ENCODE measurements at regions of chr6 and their contacts with region 1.

Region 1: DNA sequence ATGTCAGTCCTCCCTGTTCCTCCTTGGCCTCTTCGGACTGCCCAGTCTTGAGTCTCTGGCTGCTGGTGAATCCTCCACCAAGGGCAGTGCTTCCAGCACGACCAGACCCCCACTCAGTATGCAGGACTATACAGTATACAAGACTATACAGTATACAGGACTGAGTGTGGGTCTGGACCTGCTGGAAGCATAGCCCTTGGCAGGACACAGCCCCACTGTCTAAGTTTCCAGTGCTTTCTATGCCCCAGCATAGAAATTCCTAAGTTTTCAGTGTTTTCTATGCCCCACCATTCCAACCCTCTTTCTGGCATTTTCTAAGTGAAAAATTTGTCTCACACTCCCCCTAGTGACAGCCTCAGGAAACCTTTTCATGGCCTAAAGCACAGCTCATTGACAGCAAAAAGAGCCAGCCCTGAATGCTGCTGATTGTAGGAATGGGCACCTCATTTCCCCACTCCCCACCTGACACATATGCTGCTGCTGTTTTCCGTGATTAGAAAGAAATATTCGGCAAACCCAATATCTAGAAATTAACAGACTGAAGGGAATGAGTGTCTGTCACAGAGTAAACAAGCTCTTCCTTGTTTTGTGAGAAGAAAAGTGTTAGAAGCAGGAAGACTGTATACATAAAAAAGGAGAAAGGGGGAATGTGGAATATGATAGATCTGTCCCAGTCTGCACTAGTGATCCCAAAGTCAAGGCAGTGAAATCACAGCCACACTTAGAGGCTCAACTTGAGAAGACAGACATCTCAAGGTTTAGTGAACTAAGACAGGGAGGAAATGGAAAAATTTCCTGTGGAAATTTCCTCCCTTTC is 206.9 kb downstream of the IBTK start:
- DNase-seq: no peak
- ATAC-seq: no peak
- H3K4me3 Mint-ChIP-seq: no peak overlapping the region
- H3K27ac Mint-ChIP-seq: no peak overlapping the region
- H3K4me1 Mint-ChIP-seq: no peaks in the 10 kb centered on the region
- H3K27me3 Mint-ChIP-seq: peaks cover 2% of the 10 kb centered on the region
- CTCF ChIP-seq: no peak

Region 2: DNA sequence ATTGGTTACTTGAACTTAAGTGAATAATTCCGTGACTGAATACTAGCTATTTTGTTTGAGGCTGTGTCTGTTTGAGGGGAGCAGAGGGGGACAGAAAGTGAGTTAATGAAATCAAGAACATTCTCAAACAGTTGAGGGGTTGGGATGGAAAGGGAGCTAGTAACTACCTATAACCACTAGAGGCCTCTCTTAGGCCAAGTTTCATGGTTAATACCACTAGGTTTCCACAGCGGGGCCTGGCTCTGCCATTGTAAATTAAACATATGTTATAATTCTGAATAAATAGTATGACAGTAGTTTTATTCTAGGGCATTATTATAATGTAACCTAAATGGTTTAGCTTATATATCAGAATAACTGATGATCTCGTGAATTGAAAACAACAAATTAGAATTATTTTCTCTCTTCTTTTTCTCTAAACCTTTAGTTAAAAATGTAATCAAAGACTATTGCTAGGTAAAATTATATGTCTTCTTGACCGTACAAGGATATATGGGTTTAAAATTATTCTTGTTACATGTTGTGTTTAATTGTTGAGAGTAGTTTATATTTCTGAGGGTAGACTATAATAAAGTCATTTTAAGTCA is 1826.1 kb before region 1 on chr6:
- CTCF ChIA-PET with region 1: interaction called, 8 read pairs
- POLR2A ChIA-PET with region 1: no interaction called
- intact Hi-C with region 1: loop called (anchors 1 kb)
- DNase-seq: no peak
- ATAC-seq: no peak
- H3K4me3 Mint-ChIP-seq: no peak overlapping the region
- H3K27ac Mint-ChIP-seq: no peak overlapping the region
- H3K4me1 Mint-ChIP-seq: no peaks in the 10 kb centered on the region
- H3K27me3 Mint-ChIP-seq: no peaks in the 10 kb centered on the region
- CTCF ChIP-seq: no peak

Region 3: DNA sequence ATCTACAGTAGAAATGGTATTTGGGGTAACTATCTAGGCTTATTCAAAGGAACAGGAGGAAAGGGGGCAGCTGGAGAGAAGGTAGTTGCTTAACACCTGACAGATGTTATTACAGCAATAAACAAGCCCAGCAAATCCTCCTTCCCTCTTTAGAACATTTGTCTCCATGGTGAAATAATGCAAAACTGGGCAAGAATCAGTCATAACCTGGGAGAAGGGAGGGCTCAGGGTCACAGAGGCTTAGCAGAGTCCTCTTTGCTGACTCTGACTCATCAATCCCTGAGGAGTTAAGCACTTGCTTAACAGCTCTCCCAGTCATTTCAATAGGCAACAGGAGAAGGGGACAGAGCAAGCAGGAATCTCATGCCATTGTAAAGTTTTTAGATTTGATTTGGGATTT is 23.3 kb before region 1 on chr6:
- CTCF ChIA-PET with region 1: no interaction called
- POLR2A ChIA-PET with region 1: no interaction called
- intact Hi-C with region 1: no loop called
- DNase-seq: no peak
- ATAC-seq: no peak
- H3K4me3 Mint-ChIP-seq: no peak overlapping the region
- H3K27ac Mint-ChIP-seq: no peak overlapping the region
- H3K4me1 Mint-ChIP-seq: no peaks in the 10 kb centered on the region
- H3K27me3 Mint-ChIP-seq: no peaks in the 10 kb centered on the region
- CTCF ChIP-seq: no peak

Region 4: DNA sequence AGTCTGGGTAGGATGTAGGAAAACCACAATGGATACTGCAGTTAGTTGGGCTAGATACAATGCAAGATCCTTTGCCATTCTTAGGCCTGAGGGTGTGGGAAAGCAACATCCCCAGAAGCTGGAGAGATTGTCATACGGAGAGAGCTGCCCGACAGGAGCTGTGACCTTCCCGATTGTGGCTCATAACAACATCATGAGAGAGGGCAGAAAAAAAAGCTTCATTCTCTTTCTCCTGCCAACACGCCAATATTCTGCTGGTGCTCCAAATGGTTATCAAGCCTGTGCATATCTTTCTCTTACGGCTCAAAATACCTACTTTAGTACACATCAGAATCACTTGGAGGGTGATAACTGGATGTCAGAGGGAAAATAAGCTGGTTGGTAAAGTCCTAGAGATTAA is 125.9 kb after region 1 on chr6:
- CTCF ChIA-PET with region 1: no interaction called
- POLR2A ChIA-PET with region 1: no interaction called
- intact Hi-C with region 1: no loop called
- DNase-seq: no peak
- ATAC-seq: no peak
- H3K4me3 Mint-ChIP-seq: no peak overlapping the region
- H3K27ac Mint-ChIP-seq: no peak overlapping the region
- H3K4me1 Mint-ChIP-seq: no peaks in the 10 kb centered on the region
- H3K27me3 Mint-ChIP-seq: no peaks in the 10 kb centered on the region
- CTCF ChIP-seq: no peak